ENCODE measurements at regions of chr7 and their contacts with region 1.

Region 1: DNA sequence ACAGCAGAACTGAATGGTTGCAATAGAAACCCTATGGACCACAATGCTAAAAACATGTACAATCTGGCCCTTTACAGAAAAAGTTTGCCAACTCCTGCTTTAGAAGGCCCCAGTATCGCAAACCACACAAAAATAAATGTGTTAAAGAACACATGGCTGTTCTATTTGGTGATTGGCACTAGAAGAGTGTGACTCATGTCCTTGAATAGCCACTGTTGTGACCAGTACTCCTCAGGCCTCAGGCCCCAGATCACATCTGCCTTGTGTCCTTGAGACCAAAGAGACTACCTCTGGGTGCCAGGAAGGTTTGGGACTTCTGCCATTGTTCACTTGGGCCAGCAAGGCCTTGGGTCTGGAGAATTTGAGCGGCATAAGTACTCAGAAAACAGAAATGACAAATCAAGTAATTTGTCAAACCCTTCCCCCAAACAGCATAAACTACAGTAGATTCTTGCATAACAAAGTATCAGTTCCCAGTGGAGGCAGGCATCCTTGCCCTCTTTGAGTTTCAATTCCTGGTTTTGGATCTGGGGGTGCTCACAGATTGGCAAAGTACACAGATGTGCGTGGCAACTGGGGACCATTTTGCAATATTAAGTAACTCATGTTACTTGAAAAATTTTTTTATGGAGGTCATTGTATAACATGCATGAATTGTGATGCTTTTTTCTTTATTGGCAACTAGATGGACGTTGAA is 50.2 kb downstream of the MTURN start:
- DNase-seq: no peak
- H3K4me3 ChIP-seq: no peak overlapping the region
- H3K27ac ChIP-seq: no peak overlapping the region
- H3K4me1 ChIP-seq: no peaks in the 10 kb centered on the region
- H3K27me3 ChIP-seq: no peaks in the 10 kb centered on the region
- CTCF ChIP-seq: no peak

Region 2: DNA sequence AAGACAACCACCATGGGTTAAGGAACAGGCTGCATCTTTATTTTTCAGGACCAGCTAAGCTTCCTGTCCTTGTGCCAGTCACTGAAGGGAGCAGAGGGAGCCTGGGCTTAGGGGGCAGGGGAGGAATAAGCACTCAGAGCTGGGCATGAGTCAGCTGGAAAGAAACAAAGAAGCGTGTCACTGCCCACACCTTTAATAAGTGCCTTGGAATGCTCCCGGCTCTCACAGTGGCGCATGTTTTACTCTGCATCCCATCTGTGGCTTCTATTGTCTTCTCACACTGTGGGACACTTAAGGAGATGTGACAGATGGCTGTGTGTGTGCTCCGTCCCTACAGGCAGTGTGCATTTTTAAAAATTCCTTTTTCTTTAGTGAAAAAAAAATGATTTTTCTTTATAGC is 21.6 kb after region 1 on chr7:
- CTCF ChIA-PET with region 1: no interaction called
- POLR2A ChIA-PET with region 1: no interaction called
- intact Hi-C with region 1: loop called (anchors 2 kb)
- DNase-seq: peak; percentile 79 to 88
- H3K4me3 ChIP-seq: peak overlapping the region; percentile 27; the same call in 1 of the 2 replicates
- H3K27ac ChIP-seq: peak overlapping the region; percentile 65
- H3K4me1 ChIP-seq: peaks cover 15% of the 10 kb centered on the region
- H3K27me3 ChIP-seq: no peaks in the 10 kb centered on the region
- CTCF ChIP-seq: no peak

Measured in PC-9 (cell line).